Activated B cell treated with CpG ODN at 0.5 μM for 24 hours (primary cell): ENCODE measurements at regions of chr2 and their contacts with region 1.

Region 1: DNA sequence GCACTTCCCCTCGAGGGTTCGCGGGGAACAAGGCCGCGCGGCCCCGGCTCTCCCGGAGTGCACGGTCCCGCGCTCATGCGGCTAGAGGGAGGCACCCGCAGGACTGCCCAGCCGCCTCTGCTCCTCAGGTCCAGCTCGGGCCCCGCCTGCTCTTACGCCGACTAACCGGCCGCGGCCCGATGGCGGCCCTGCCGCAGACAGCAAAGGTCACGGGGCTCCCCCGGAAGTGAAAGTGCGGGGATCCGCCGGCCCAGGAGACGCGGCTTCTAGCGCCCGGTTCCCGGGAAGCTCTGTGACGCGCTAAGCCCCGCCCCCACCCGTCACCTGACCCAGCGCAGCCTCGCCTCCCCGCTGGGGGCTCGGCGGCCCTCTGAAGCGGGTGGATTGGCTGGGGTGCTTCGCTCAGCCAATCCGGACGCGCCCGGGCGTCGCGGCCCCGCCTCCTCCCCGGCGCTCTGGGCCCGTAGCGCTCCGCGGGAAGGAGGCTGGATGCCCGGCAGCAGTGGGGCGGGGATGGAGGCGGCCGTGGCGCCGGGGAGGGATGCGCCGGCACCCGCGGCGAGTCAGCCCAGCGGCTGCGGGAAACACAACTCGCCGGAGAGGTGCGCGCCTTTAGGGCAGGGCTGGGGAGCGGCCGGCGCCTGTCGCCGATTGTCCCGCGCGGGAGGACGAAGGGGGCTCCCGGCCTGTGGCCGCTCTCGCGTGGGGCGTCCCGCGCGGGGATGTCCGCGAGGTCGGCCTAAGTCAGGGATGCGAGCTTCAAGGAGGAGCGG is at the start of gene SCLY:
- DNase-seq: peak; percentile 89
- ATAC-seq: peak; percentile 98
- H3K4me3 Mint-ChIP-seq: peak within 1 kb of the TSS; percentile 85
- H3K27ac Mint-ChIP-seq: peak within 1 kb of the TSS; percentile 78
- H3K4me1 Mint-ChIP-seq: peaks cover 20% of the 10 kb centered on the region
- H3K27me3 Mint-ChIP-seq: peaks cover 10% of the 10 kb centered on the region
- CTCF ChIP-seq: no peak
- total RNA-seq, gene SCLY: 24.1 and 26.9 TPM in 2 replicates

Region 2: GRCh38 chr2:236644502-236644911 is 1416.2 kb before region 1 on chr2:
- CTCF ChIA-PET with region 1: no interaction called
- POLR2A ChIA-PET with region 1: no interaction called
- intact Hi-C with region 1: no loop called
- DNase-seq: no peak
- ATAC-seq: no peak
- H3K4me3 Mint-ChIP-seq: no peak overlapping the region
- H3K27ac Mint-ChIP-seq: no peak overlapping the region
- H3K4me1 Mint-ChIP-seq: no peaks in the 10 kb centered on the region
- H3K27me3 Mint-ChIP-seq: peaks cover 10% of the 10 kb centered on the region
- CTCF ChIP-seq: no peak

Region 3: DNA sequence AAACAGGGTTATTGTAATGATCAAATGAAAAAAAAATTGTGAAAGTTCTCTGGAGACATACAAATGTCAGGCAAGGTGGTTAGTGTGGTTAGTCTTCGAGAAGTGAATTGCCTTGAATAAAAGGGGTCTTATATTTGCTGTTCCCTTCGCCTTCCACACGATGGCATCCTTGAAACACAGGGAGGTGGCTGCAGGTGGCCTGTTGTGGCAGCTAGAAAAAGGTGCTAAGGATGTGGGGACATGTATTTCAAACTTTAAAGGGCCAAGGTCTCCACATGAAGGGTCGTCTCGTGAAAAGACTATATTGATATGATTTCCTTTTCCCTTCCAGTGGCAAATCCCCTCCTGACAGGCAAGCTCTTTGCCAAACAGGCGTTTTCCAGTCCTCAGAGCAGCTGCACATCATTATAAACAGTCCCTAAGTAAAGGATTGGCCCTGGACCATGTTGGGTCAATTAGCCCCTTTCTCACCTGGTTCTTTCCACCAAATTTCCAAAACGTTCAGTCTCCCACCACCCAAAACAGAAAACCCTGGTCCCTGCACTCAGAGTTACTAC is 906.6 kb before region 1 on chr2:
- CTCF ChIA-PET with region 1: no interaction called
- POLR2A ChIA-PET with region 1: no interaction called
- intact Hi-C with region 1: no loop called
- DNase-seq: no peak
- ATAC-seq: no peak
- H3K4me3 Mint-ChIP-seq: no peak overlapping the region
- H3K27ac Mint-ChIP-seq: no peak overlapping the region
- H3K4me1 Mint-ChIP-seq: no peaks in the 10 kb centered on the region
- H3K27me3 Mint-ChIP-seq: peaks cover 4% of the 10 kb centered on the region
- CTCF ChIP-seq: no peak

Region 4: GRCh38 chr2:237895544-237896506 is 164.9 kb before region 1 on chr2:
- CTCF ChIA-PET with region 1: no interaction called
- POLR2A ChIA-PET with region 1: interaction called, 4 read pairs
- intact Hi-C with region 1: loop called (anchors 10 kb)
- DNase-seq: no peak
- ATAC-seq: no peak
- H3K4me3 Mint-ChIP-seq: no peak overlapping the region
- H3K27ac Mint-ChIP-seq: no peak overlapping the region
- H3K4me1 Mint-ChIP-seq: peaks cover 47% of the 10 kb centered on the region
- H3K27me3 Mint-ChIP-seq: no peaks in the 10 kb centered on the region
- CTCF ChIP-seq: no peak

Region 5: DNA sequence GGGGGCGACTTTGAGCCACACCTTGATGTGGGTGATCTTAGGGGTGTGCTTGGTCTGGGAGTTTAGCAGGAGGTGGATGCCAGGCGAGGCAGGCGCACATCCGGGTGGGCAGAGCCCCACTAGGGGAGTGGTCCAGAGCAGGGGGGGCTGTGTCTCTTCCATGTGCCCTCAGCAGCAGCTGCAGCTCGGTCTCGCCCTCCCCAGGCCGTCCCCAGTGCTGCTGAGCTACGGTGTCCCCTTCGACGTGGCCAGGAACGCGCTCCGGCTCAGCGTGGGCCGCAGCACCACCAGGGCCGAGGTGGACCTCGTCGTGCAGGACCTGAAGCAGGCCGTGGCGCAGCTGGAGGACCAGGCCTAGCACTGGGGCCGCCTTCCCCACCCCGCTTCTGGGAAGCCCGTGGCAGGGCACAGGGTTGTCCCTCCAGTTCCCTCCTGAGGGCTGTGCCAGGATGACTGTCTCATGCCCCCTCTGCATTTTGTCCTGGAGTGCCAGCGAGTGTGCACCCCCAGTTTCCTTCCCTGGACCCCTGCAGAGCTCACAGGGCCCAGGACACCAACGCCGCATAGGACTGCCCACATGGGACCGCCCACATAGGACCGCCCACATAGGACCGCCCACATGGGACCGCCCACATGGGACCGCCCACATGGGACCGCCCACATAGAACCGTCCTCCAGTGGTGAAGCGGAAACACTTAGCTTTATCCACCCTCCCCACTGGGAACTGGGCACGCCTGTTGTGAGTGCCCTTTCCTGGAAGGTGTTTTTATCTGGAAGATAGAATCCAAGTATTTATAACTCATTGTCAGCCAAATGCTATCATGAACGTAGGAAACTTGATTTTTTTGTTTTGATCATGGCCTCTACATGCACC is 37.5 kb after region 1 on chr2:
- CTCF ChIA-PET with region 1: no interaction called
- POLR2A ChIA-PET with region 1: interaction called, 7 read pairs
- intact Hi-C with region 1: loop called (anchors 1 kb)
- DNase-seq: no peak
- ATAC-seq: peak; percentile 98
- H3K4me3 Mint-ChIP-seq: peak overlapping the region; percentile 72
- H3K27ac Mint-ChIP-seq: peak overlapping the region; percentile 76
- H3K4me1 Mint-ChIP-seq: peaks cover 19% of the 10 kb centered on the region
- H3K27me3 Mint-ChIP-seq: no peaks in the 10 kb centered on the region
- CTCF ChIP-seq: no peak

Region 6: GRCh38 chr2:238106686-238107524 is 46.2 kb after region 1 on chr2:
- CTCF ChIA-PET with region 1: no interaction called
- POLR2A ChIA-PET with region 1: interaction called, 4 read pairs
- intact Hi-C with region 1: loop called (anchors 2 kb)
- DNase-seq: peak; percentile 15
- ATAC-seq: no peak
- H3K4me3 Mint-ChIP-seq: peak overlapping the region; percentile 88
- H3K27ac Mint-ChIP-seq: peak overlapping the region; percentile 86
- H3K4me1 Mint-ChIP-seq: peaks cover 35% of the 10 kb centered on the region
- H3K27me3 Mint-ChIP-seq: no peaks in the 10 kb centered on the region
- CTCF ChIP-seq: no peak

Region 7: GRCh38 chr2:238203094-238203972 is 142.6 kb after region 1 on chr2 and contains the start of gene ILKAP:
- CTCF ChIA-PET with region 1: no interaction called
- POLR2A ChIA-PET with region 1: interaction called, 10 read pairs
- intact Hi-C with region 1: loop called (anchors 1 kb)
- DNase-seq: peak; percentile 90
- ATAC-seq: peak; percentile 97
- H3K4me3 Mint-ChIP-seq: peak within 1 kb of the TSS; percentile 85
- H3K27ac Mint-ChIP-seq: peak within 1 kb of the TSS; percentile 89
- H3K4me1 Mint-ChIP-seq: peaks cover 48% of the 10 kb centered on the region
- H3K27me3 Mint-ChIP-seq: no peaks in the 10 kb centered on the region
- CTCF ChIP-seq: no peak
- total RNA-seq, gene ILKAP: 64.4 and 77.3 TPM in 2 replicates

Region 8: GRCh38 chr2:238239872-238240751 is 179.4 kb after region 1 on chr2 and contains the start of gene HES6:
- CTCF ChIA-PET with region 1: no interaction called
- POLR2A ChIA-PET with region 1: interaction called, 5 read pairs
- intact Hi-C with region 1: loop called (anchors 2 kb)
- DNase-seq: peak; percentile 77
- ATAC-seq: peak; percentile 86
- H3K4me3 Mint-ChIP-seq: peak within 1 kb of the TSS; percentile 86
- H3K27ac Mint-ChIP-seq: peak within 1 kb of the TSS; percentile 68
- H3K4me1 Mint-ChIP-seq: peaks cover 13% of the 10 kb centered on the region
- H3K27me3 Mint-ChIP-seq: peaks cover 12% of the 10 kb centered on the region
- CTCF ChIP-seq: no peak
- total RNA-seq, gene HES6: 4.4 and 5.0 TPM in 2 replicates

Region 9: DNA sequence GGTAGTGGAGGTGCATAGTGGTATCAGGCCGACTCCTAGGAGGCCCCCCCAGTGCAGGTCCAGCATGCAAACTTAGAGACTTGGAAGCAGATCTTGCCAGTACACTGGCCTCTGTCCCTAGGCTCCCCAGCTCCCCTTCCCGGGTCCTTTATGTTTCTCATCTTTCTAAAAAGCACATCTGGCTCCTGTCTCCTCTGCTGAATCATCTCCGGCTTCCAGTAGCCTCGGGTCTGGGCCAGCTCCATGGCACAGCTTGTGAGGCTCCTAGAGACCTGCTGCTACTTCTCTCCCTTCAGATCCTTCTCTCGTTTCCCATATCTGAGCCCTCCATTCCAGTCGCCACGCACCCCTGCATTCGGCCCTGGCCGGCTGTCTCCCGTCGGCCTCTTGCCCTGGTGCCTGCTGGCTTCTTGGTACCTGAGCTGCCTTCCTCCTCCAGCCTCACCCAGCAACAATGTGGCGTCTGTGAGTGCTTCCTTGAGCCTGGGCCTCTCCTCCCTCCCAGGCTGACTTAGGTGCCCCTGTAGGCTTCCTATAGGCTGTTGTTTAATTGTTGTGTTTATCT is 266.2 kb after region 1 on chr2:
- CTCF ChIA-PET with region 1: no interaction called
- POLR2A ChIA-PET with region 1: no interaction called
- intact Hi-C with region 1: no loop called
- DNase-seq: no peak
- ATAC-seq: no peak
- H3K4me3 Mint-ChIP-seq: no peak overlapping the region
- H3K27ac Mint-ChIP-seq: no peak overlapping the region
- H3K4me1 Mint-ChIP-seq: no peaks in the 10 kb centered on the region
- H3K27me3 Mint-ChIP-seq: no peaks in the 10 kb centered on the region
- CTCF ChIP-seq: no peak